Esophagus muscularis mucosa (tissue), 4 donors: ENCODE measurements at regions of chr17 and their contacts with region 1.

Region 1: GRCh38 chr17:68398691-68399637 is 58.3 kb downstream of the WIPI1 start:
- DNase-seq: peak; percentile 90
- H3K4me3 ChIP-seq: no peak overlapping the region
- H3K27ac ChIP-seq: no peak overlapping the region
- H3K4me1 ChIP-seq: peaks cover 7 to 10% (median 10%) of the 10 kb centered on the region in 4 donors
- H3K27me3 ChIP-seq: no peaks in the 10 kb centered on the region
- CTCF ChIP-seq: peak; percentile 59 to 72 (median 67)
- EP300 ChIP-seq: no peak
- POLR2A ChIP-seq: no peak

Region 2: DNA sequence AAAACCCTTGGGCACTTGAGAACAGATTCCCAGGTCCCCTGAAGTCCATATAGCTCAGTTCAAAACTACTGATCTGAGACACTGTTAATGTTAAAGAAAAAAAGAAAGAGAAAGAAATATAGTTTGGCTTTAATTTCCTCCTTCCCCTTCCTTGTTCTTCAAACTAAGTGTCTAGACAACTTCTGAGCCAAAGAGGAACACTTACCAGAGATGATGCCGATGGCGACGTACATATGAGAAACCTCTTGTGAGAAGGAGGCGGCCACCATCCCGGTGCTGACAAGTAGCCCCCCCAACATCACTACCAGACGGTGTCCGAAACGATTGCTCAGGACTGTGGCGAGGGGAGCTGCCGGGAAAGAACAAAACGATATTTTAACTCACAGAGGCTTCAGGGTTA is 125.2 kb before region 1 on chr17:
- intact Hi-C with region 1: loop called (anchors 5 kb)
- DNase-seq: no peak
- H3K4me3 ChIP-seq: no peak overlapping the region
- H3K27ac ChIP-seq: no peak overlapping the region
- H3K4me1 ChIP-seq: no peaks in the 10 kb centered on the region
- H3K27me3 ChIP-seq: no peaks in the 10 kb centered on the region
- CTCF ChIP-seq: no peak
- EP300 ChIP-seq: no peak
- POLR2A ChIP-seq: no peak

Region 3: GRCh38 chr17:68455901-68456335 is 57.0 kb after region 1 on chr17:
- intact Hi-C with region 1: no loop called
- DNase-seq: no peak
- H3K4me3 ChIP-seq: peak overlapping the region; percentile 79 to 95 (median 88)
- H3K27ac ChIP-seq: peak overlapping the region; percentile 94 to 99 (median 96)
- H3K4me1 ChIP-seq: peaks cover 28 to 41% (median 39%) of the 10 kb centered on the region in 4 donors
- H3K27me3 ChIP-seq: no peaks in the 10 kb centered on the region
- CTCF ChIP-seq: no peak
- EP300 ChIP-seq: no peak
- POLR2A ChIP-seq: no peak

Region 4: GRCh38 chr17:68507576-68507975 is 108.6 kb after region 1 on chr17:
- intact Hi-C with region 1: no loop called
- DNase-seq: no peak
- H3K4me3 ChIP-seq: no peak overlapping the region
- H3K27ac ChIP-seq: no peak overlapping the region
- H3K4me1 ChIP-seq: peaks cover 6 to 8% (median 7%) of the 10 kb centered on the region in 4 donors
- H3K27me3 ChIP-seq: no peaks in the 10 kb centered on the region
- CTCF ChIP-seq: no peak
- EP300 ChIP-seq: no peak
- POLR2A ChIP-seq: no peak